Activated B cell treated with CpG ODN at 0.5 μM for 24 hours (primary cell): ENCODE measurements at regions of chr4 and their contacts with region 1.

Region 1: DNA sequence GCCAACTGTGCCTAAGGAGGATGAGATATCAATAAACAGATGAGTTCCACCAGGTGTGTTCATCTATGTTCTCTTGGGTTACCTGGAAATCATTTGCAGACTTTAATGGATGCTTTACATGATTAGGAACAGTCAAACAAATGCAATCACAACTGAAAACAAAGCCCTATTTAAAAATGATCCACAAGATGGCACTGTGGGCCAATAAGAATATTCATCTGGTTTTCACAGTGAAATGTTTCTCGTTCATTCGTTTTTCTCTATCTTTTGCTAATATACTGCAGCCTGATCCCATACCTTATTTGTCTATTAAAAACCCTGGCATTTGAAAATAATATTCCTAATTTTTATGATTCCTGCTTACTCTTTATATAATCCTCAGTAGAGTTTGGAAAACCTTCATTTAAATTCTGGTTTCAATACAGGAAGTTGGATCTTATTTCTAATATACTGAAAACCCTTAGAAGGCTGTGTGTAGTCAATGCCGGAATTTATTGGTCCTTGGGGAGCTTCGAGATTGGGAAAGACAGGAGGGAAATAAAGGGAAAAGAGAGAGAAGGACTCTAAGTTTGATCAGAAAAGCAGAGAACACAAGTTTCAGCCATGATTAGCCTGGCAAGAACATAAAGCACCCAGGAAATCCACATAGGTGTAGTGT is 63.8 kb upstream of the TAPT1 start:
- DNase-seq: no peak
- ATAC-seq: no peak
- H3K4me3 Mint-ChIP-seq: no peak overlapping the region
- H3K27ac Mint-ChIP-seq: no peak overlapping the region
- H3K4me1 Mint-ChIP-seq: peaks cover 4% of the 10 kb centered on the region
- H3K27me3 Mint-ChIP-seq: peaks cover 6% of the 10 kb centered on the region
- CTCF ChIP-seq: no peak

Region 2: DNA sequence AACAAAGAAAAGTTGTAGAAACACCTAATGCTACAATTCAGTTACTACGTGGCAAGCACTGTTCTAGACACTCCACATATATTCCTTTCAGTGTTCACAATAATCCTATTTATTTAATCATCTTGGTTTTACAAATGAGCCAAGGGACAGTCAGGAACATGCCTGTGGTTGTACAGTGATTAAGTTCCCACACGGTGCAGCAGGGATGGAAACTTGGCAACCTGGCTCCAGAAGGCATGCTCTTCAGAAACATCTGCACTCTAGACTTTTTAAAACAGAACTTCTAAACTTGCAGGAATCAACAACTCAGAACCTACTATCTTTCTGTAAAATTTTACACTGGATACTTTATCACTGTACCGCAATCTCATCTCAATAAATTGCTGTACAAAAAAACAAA is 95.8 kb before region 1 on chr4:
- CTCF ChIA-PET with region 1: no interaction called
- POLR2A ChIA-PET with region 1: no interaction called
- intact Hi-C with region 1: no loop called
- DNase-seq: no peak
- ATAC-seq: no peak
- H3K4me3 Mint-ChIP-seq: no peak overlapping the region
- H3K27ac Mint-ChIP-seq: no peak overlapping the region
- H3K4me1 Mint-ChIP-seq: peaks cover 25% of the 10 kb centered on the region
- H3K27me3 Mint-ChIP-seq: no peaks in the 10 kb centered on the region
- CTCF ChIP-seq: no peak

Region 3: DNA sequence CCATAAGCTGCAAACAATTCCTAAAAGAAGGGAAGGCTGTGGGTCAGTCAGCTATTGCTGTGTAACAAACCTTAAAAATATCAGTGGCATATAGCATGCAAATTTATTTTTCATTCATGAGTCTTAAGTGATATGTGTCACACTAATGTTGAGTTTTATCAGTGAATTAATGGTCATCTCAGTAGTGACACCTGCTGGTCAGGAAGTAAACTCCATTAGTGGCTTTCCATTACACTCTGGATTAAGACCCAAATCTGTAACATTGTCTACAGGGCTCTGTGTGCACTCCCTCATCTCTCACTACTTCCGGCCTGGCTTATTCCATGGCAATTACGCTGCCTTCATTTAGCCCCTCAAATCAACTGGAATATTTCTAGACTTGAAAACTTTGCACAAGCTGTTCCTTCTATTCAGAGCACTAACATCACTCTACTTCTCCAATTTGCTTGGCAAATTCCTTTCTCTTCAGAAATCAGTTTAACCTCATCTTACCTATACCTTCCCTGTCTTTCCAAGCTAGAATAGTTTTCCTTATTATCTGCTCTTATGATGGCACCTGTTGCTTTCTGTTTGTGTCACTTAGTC is 153.6 kb after region 1 on chr4:
- CTCF ChIA-PET with region 1: no interaction called
- POLR2A ChIA-PET with region 1: no interaction called
- intact Hi-C with region 1: loop called (anchors 1 kb)
- DNase-seq: no peak
- ATAC-seq: no peak
- H3K4me3 Mint-ChIP-seq: no peak overlapping the region
- H3K27ac Mint-ChIP-seq: no peak overlapping the region
- H3K4me1 Mint-ChIP-seq: peaks cover 1% of the 10 kb centered on the region
- H3K27me3 Mint-ChIP-seq: peaks cover 2% of the 10 kb centered on the region
- CTCF ChIP-seq: peak; percentile 33

Region 4: GRCh38 chr4:17447675-17448298 is 1157.8 kb after region 1 on chr4:
- CTCF ChIA-PET with region 1: interaction called, 4 read pairs
- POLR2A ChIA-PET with region 1: interaction called, 3 read pairs
- intact Hi-C with region 1: loop called (anchors 1 kb)
- DNase-seq: no peak
- ATAC-seq: no peak
- H3K4me3 Mint-ChIP-seq: no peak overlapping the region
- H3K27ac Mint-ChIP-seq: no peak overlapping the region
- H3K4me1 Mint-ChIP-seq: no peaks in the 10 kb centered on the region
- H3K27me3 Mint-ChIP-seq: no peaks in the 10 kb centered on the region
- CTCF ChIP-seq: no peak

Region 5: GRCh38 chr4:17468371-17469221 is 1178.6 kb after region 1 on chr4:
- CTCF ChIA-PET with region 1: interaction called, 10 read pairs
- POLR2A ChIA-PET with region 1: no interaction called
- intact Hi-C with region 1: no loop called
- DNase-seq: no peak
- ATAC-seq: no peak
- H3K4me3 Mint-ChIP-seq: no peak overlapping the region
- H3K27ac Mint-ChIP-seq: no peak overlapping the region
- H3K4me1 Mint-ChIP-seq: peaks cover 2% of the 10 kb centered on the region
- H3K27me3 Mint-ChIP-seq: no peaks in the 10 kb centered on the region
- CTCF ChIP-seq: no peak